Cardiac septum (tissue), 1 donor: ENCODE measurements at regions of chr9 and their contacts with region 1.

Region 1: DNA sequence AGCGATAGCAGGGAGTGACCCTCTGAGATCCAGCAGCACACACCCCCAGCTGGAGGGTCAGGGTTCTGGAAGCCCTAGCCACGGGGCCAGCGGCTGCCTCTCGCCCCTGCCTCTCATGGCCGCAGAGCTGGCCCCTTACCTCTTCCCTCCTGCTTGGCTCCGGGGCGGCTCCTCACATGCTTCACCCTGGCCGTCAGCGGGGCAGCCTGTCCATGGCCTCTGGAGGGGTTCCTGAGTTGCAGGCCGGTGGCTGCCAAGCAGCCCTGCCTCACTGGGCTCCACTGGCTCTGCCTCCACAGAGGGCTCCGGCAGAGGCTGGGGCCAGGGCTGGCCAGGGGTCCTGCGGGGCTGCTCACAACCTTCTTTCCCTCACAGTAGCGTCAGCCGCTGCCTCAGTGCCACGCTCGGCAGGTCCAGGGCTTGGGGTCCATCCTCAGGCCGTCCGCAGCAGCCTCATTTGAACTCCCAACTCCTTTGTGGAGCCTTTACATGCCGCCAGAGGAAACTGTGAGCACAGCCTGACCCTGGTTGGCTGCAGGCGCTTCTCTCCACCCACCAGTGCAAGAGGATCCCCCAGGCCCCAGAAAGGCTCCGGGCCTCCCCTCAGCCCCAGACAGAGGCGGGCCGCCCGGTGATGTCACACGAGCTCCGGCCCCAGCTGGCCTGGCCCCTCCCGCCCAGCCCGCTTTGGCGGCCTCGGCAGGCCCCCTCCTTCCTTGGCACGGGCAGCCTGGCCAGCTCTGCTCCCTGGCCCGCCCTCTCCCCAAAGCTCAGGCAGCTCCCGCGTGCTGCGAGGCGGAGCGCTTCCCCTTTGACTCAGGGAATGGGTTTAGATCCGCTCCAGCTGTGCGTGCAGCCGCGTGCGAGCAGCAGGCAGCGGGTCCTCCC is at the start of gene ANGPTL2:
- DNase-seq: peak; percentile 93
- total RNA-seq, gene ANGPTL2: 41.4 TPM

Region 2: GRCh38 chr9:126985870-126986498 is 136.4 kb before region 1 on chr9:
- intact Hi-C with region 1: no loop called
- DNase-seq: no peak

Region 3: GRCh38 chr9:127035951-127036350 is 86.5 kb before region 1 on chr9:
- intact Hi-C with region 1: loop called (anchors 5 kb)
- DNase-seq: peak; percentile 70

Region 4: DNA sequence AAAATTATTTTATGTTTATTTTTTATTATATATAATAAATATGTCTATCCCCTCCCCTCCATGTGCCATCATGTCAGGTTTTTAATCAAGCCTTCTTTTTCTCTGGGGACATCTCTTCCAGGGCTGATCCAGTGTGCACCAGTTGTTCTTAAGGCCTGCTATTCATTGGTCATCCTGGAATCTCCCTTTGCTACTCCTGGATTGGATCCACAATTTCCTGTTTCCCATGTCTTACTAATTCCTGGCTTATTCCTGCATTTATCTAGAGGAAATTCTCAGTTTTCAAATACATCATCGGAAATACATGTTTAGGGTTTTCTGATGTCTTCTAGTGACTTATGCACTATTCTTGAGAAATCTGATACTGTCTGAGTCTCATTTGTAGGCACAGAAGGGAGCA is 56.8 kb before region 1 on chr9:
- intact Hi-C with region 1: no loop called
- DNase-seq: no peak